Dorsolateral prefrontal cortex (tissue), 120 donors: ENCODE measurements at regions of chr14 and their contacts with region 1.

Region 1: DNA sequence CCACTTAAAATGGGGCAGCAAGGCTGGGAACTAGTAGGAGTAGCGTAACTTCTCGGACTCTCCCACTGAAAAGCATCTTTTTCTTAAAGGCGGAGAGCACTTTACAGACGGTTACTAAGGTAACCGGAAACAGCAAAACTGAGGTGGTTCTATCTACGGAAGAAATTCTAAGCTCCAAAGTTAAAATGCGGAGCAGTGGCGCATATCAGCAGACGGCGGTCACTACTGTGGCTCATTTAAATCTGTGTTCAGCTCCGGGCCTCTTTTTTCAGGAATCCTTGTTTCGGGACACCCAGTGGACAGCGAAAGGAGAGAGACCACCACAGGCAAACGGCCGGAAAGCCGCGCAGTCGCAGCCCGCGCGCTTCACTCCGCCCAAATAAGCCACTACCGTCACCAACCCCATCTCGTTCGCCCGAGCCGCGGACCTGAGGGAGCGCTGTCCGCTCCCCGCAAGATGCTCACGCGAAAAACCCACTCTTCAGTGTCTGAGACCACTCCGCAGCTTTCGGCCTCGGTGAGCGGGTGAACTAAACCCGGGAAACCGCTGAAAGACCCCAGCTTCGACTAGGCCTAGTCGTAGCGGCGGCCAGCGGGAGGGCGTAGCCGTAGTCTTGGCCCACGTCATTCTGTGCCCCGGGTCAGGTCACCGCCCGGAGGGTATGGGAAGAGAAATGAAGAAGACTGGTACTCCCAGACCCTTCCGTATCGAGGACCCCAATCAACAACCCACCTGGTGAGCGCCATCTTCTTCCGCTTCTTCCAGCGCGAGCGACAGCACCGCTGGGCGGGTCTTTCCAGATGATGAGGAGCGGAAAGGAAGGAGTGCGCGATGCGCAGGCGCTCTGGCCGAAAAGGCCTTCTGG is at the start of gene SNW1:
- DNase-seq: peak; percentile 93 to 97 (median 96)
- H3K4me3 ChIP-seq: peak within 1 kb of the TSS; percentile 63 to 100 (median 93)
- H3K27ac ChIP-seq: peak within 1 kb of the TSS; percentile 68 to 98 (median 91)
- H3K27me3 ChIP-seq: no peaks in the 10 kb centered on the region
- CTCF ChIP-seq: peak in 29 of 56 donors; percentile 6 to 57 (median 28)
- total RNA-seq, gene SNW1: 37.1 to 77.1 (median 57.5) TPM

Region 2: GRCh38 chr14:77799863-77800730 is 39.5 kb after region 1 on chr14 and contains the start of gene ADCK1:
- intact Hi-C with region 1: loop called (anchors 2 kb)
- DNase-seq: peak; percentile 90 to 95 (median 93)
- H3K4me3 ChIP-seq: peak within 1 kb of the TSS; percentile 45 to 97 (median 84)
- H3K27ac ChIP-seq: peak within 1 kb of the TSS; percentile 54 to 98 (median 94)
- H3K27me3 ChIP-seq: no peaks in the 10 kb centered on the region
- CTCF ChIP-seq: peak in 33 of 56 donors; percentile 2 to 53 (median 30)
- total RNA-seq, gene ADCK1: 5.3 to 35.6 (median 17.8) TPM

Region 3: DNA sequence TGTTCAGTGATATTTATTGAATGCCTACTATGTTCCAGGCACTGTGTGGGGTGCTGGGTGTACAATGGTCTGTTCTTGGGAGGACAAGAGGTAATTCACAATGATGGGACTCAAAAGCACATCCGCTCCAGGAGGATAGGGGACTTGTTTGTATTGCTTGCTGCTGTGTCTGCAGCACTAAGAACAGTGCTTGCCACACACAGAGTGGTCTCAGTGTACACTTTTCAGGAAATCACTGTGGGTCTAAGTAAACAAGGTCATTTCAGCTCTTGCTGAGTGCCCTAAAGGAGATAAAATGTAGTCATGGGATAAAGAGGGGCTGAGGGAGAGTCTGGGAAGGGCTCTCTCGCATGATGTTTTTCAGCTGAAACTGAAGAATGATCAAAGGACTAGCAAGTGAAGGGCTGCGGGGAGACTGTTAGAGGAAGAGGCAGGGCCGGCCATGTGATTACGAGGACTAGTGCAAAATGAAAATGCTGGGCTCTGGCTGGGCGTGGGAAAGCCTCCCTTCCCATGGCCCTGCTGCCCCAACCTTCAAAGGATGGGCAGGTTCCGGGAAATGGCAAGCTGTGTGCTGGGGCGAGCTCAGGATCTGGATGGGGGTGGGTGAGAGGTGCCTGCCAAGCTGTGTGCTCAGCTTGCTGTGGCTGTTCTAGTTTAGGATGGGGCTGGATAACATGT is 78.4 kb after region 1 on chr14:
- intact Hi-C with region 1: loop called in 1 of 2 experiments (anchors 5 kb)
- DNase-seq: peak in 7 of 10 donors; percentile 24 to 77 (median 49)
- H3K4me3 ChIP-seq: peak overlapping the region in 23 of 59 donors; percentile 2 to 41 (median 18)
- H3K27ac ChIP-seq: peak overlapping the region; percentile 20 to 97 (median 86)
- H3K27me3 ChIP-seq: no peaks in the 10 kb centered on the region
- CTCF ChIP-seq: peak in 1 of 56 donors; percentile 14